Activated CD8-positive, alpha-beta memory T cell treated with anti-CD3 and anti-CD28 coated beads, Interleukin-2, amount 10 ng/mL, durations not matched to agents 7 days and 5 days (primary cell): ENCODE measurements at regions of chr22 and their contacts with region 1.

Region 1: DNA sequence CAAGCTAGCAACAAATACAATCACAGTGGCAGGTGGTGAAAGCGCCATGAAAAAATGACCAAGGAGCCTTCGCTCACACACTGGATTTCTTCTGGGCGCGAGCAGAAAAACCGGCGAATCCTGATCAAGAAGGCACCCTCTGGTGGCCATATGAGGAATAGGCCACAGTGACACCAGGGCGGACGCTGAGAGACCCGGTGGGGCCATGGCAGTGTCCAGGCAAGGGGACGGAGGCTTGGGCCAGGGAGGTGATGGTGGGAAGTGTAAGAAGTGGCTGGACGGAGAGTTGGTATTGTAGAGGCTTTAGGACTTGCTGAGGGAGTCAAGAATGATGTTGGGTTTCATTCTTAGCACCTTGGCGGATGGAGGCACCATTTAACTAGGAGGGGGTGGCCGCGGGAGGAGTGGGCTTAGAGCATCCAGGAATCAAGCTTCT is 16.9 kb upstream of the RAC2 start:
- DNase-seq: peak; percentile 75
- ATAC-seq: peak; percentile 77
- H3K4me3 Mint-ChIP-seq: no peak overlapping the region
- H3K27ac Mint-ChIP-seq: peak overlapping the region; percentile 42
- H3K4me1 Mint-ChIP-seq: peaks cover 23% of the 10 kb centered on the region
- H3K27me3 Mint-ChIP-seq: peaks cover 6% of the 10 kb centered on the region

Region 2: GRCh38 chr22:37218771-37219411 is 42.0 kb before region 1 on chr22:
- CTCF ChIA-PET with region 1: interaction called, 14 read pairs
- DNase-seq: peak; percentile 82
- ATAC-seq: peak; percentile 59
- H3K4me3 Mint-ChIP-seq: peak overlapping the region; percentile 71
- H3K27ac Mint-ChIP-seq: peak overlapping the region; percentile 92
- H3K4me1 Mint-ChIP-seq: peaks cover 74% of the 10 kb centered on the region
- H3K27me3 Mint-ChIP-seq: no peaks in the 10 kb centered on the region

Region 3: DNA sequence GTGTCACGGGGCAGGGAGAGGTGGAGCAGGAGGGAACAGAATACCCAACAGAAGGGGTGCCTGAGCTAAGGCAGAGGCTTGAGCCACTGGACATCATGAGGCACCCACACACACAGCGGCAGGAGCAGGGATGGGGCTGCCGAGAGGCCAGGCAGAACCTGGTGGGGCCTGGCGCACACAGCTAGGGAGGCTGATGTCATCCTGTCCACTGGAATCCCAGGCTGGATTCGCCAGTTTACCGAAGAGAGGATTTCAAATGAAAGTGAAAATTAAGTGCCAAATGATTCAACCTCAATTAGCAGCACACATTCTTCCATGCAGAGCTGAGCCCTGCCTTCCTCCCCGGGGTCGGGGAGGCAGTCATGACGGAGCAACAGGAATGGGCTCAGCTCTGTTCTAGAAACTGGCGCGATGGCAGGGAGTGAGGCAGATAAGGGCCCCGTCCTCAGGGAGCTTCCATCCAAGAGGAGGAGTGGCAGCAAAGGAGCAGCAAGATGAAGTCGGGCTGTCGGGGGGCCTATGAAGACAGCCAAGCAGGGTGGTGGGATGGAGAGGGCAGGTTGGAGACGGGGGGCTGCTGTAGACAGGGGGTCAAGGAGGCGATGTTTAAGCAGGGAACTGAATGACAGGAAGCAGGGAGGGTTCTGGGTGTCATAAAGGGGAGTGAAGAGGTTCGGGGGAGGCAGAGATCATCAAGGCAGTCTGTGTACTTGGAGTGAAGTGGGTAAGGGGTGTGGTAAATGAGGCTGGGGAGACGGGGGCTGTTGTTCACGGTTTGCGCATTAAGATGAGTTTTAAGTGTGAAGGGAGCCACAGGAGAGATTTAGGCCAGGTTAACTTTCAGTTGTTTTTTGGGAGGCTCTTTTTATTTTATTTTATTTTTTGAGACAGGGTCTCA is 23.3 kb before region 1 on chr22:
- CTCF ChIA-PET with region 1: interaction called, 106 read pairs
- DNase-seq: no peak
- ATAC-seq: no peak
- H3K4me3 Mint-ChIP-seq: peak overlapping the region; percentile 100
- H3K27ac Mint-ChIP-seq: peak overlapping the region; percentile 98
- H3K4me1 Mint-ChIP-seq: peaks cover 90% of the 10 kb centered on the region
- H3K27me3 Mint-ChIP-seq: no peaks in the 10 kb centered on the region

Region 4: GRCh38 chr22:37273126-37273845 is 12.4 kb after region 1 on chr22:
- CTCF ChIA-PET with region 1: interaction called, 27 read pairs
- DNase-seq: peak; percentile 71
- ATAC-seq: peak; percentile 93
- H3K4me3 Mint-ChIP-seq: peak overlapping the region; percentile 1
- H3K27ac Mint-ChIP-seq: peak overlapping the region; percentile 75
- H3K4me1 Mint-ChIP-seq: peaks cover 54% of the 10 kb centered on the region
- H3K27me3 Mint-ChIP-seq: peaks cover 2% of the 10 kb centered on the region

Region 5: DNA sequence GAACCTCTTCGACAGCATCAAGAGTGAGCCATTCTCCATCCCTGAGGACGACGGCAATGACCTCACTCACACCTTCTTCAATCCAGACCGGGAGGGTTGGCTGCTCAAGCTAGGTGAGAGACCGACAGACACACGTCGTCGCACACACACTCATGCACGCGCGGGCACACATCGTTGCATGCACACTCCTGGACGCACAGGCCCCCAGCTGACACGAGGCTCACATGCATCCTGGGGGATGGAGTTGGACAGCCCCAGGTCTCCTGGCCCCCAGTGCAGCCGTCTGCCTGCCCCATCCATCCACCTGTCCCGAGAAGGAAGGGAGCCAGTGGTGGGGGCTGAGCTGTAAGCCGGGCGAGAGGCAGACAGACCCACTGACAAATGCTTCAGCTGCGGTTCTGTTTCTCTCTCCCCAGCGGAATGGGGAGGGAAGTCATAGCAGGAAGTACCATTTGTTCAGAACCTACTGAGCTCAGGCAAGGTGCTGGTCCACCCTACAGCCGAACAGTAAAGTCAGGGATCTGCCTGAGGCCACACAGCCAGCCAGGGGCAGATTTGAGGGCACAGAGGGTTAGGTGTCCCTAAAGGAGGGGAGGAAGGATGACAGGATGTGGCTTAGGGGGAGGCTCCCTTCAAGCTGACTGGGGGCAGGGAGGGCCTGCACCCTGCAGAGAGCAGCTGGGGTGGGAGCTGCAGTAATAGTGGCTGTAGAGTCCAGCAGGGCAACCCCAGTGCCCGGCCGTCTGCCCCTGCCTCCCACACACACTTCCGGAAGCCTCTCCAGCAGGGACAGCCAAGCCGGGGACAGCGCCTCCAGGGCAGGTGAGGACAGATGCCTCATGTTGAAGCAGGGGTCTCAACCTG is 48.5 kb after region 1 on chr22:
- CTCF ChIA-PET with region 1: interaction called, 10 read pairs
- DNase-seq: peak; percentile 90
- ATAC-seq: peak; percentile 54
- H3K4me3 Mint-ChIP-seq: peak overlapping the region; percentile 51
- H3K27ac Mint-ChIP-seq: peak overlapping the region; percentile 100
- H3K4me1 Mint-ChIP-seq: peaks cover 92% of the 10 kb centered on the region
- H3K27me3 Mint-ChIP-seq: no peaks in the 10 kb centered on the region

Region 6: GRCh38 chr22:37457093-37457893 is 196.4 kb after region 1 on chr22:
- CTCF ChIA-PET with region 1: interaction called, 12 read pairs
- DNase-seq: peak; percentile 87
- ATAC-seq: peak; percentile 98
- H3K4me3 Mint-ChIP-seq: no peak overlapping the region
- H3K27ac Mint-ChIP-seq: no peak overlapping the region
- H3K4me1 Mint-ChIP-seq: no peaks in the 10 kb centered on the region
- H3K27me3 Mint-ChIP-seq: no peaks in the 10 kb centered on the region